CD8-positive, alpha-beta T cell (primary cell): ENCODE measurements at regions of chr5 and their contacts with region 1.

Region 1: GRCh38 chr5:173293817-173294672 is 34.2 kb downstream of the STC2 start:
- DNase-seq: peak; percentile 33 to 78 (median 59)
- ATAC-seq: peak; percentile 69
- H3K4me3 ChIP-seq: peak overlapping the region; percentile 4 to 27
- H3K4me3 Mint-ChIP-seq: peak overlapping the region; percentile 30
- H3K27ac ChIP-seq: no peak overlapping the region
- H3K27ac Mint-ChIP-seq: no peak overlapping the region
- H3K4me1 ChIP-seq: peaks cover 12% of the 10 kb centered on the region
- H3K4me1 Mint-ChIP-seq: peaks cover 13% of the 10 kb centered on the region
- H3K27me3 ChIP-seq: peaks cover 0 to 5% of the 10 kb centered on the region in 2 experiments
- H3K27me3 Mint-ChIP-seq: peaks cover 30% of the 10 kb centered on the region
- CTCF ChIP-seq: peak; percentile 64

Region 2: GRCh38 chr5:173178369-173178910 is 115.6 kb before region 1 on chr5:
- CTCF ChIA-PET with region 1: no interaction called
- POLR2A ChIA-PET with region 1: no interaction called
- intact Hi-C with region 1: no loop called
- DNase-seq: no peak
- ATAC-seq: no peak
- H3K4me3 ChIP-seq: no peak overlapping the region
- H3K4me3 Mint-ChIP-seq: no peak overlapping the region
- H3K27ac ChIP-seq: no peak overlapping the region
- H3K27ac Mint-ChIP-seq: no peak overlapping the region
- H3K4me1 ChIP-seq: no peaks in the 10 kb centered on the region
- H3K4me1 Mint-ChIP-seq: no peaks in the 10 kb centered on the region
- H3K27me3 ChIP-seq: no peaks in the 10 kb centered on the region
- H3K27me3 Mint-ChIP-seq: peaks cover 8% of the 10 kb centered on the region
- CTCF ChIP-seq: no peak

Region 3: GRCh38 chr5:173304591-173304988 is 10.5 kb after region 1 on chr5:
- CTCF ChIA-PET with region 1: interaction called, 14 read pairs
- POLR2A ChIA-PET with region 1: no interaction called
- intact Hi-C with region 1: no loop called
- DNase-seq: no peak
- ATAC-seq: no peak
- H3K4me3 ChIP-seq: no peak overlapping the region
- H3K4me3 Mint-ChIP-seq: no peak overlapping the region
- H3K27ac ChIP-seq: no peak overlapping the region
- H3K27ac Mint-ChIP-seq: no peak overlapping the region
- H3K4me1 ChIP-seq: no peaks in the 10 kb centered on the region
- H3K4me1 Mint-ChIP-seq: no peaks in the 10 kb centered on the region
- H3K27me3 ChIP-seq: peaks cover 0 to 2% of the 10 kb centered on the region in 2 experiments
- H3K27me3 Mint-ChIP-seq: peaks cover 39% of the 10 kb centered on the region
- CTCF ChIP-seq: no peak

Region 4: DNA sequence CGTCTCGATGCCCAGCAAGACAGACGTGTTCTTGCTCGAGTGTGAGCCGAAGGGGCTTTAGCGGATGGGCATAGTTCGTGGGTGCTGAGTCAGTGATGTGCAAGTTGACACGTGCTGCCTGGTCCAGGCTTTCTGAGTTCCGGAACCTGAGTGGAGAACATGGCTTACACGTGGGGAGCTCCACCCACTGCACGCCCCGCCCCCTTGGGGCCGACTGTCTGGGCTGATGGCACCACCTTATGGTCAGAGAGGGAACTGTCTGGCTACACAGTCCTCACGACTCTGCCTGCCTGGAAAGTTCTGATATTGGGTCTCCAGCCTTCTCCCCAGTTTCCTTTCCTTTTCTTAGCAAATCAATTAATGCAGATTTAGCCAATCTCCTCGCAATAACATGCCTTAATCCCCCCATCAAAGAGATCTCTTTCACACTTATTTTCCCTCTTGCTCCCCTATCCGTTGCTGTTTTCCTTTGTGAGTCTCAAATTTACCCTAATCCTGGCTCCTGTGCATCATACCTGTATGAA is 38.0 kb after region 1 on chr5:
- CTCF ChIA-PET with region 1: interaction called, 7 read pairs
- POLR2A ChIA-PET with region 1: no interaction called
- intact Hi-C with region 1: loop called in 1 of 2 experiments (anchors 1 kb)
- DNase-seq: peak; percentile 24 to 69 (median 61)
- ATAC-seq: peak; percentile 96
- H3K4me3 ChIP-seq: no peak overlapping the region
- H3K4me3 Mint-ChIP-seq: no peak overlapping the region
- H3K27ac ChIP-seq: no peak overlapping the region
- H3K27ac Mint-ChIP-seq: no peak overlapping the region
- H3K4me1 ChIP-seq: no peaks in the 10 kb centered on the region
- H3K4me1 Mint-ChIP-seq: peaks cover 14% of the 10 kb centered on the region
- H3K27me3 ChIP-seq: peaks cover 0 to 8% of the 10 kb centered on the region in 2 experiments
- H3K27me3 Mint-ChIP-seq: peaks cover 54% of the 10 kb centered on the region
- CTCF ChIP-seq: peak; percentile 45

Region 5: GRCh38 chr5:173573126-173573960 is 279.3 kb after region 1 on chr5:
- CTCF ChIA-PET with region 1: interaction called, 5 read pairs
- POLR2A ChIA-PET with region 1: no interaction called
- intact Hi-C with region 1: loop called in 1 of 2 experiments (anchors 2 kb)
- DNase-seq: peak; percentile 39 to 78 (median 64)
- ATAC-seq: peak; percentile 48
- H3K4me3 ChIP-seq: no peak overlapping the region
- H3K4me3 Mint-ChIP-seq: no peak overlapping the region
- H3K27ac ChIP-seq: no peak overlapping the region
- H3K27ac Mint-ChIP-seq: no peak overlapping the region
- H3K4me1 ChIP-seq: peaks cover 4% of the 10 kb centered on the region
- H3K4me1 Mint-ChIP-seq: peaks cover 7% of the 10 kb centered on the region
- H3K27me3 ChIP-seq: peaks cover 5 to 6% of the 10 kb centered on the region in 2 experiments
- H3K27me3 Mint-ChIP-seq: peaks cover 26% of the 10 kb centered on the region
- CTCF ChIP-seq: peak; percentile 94

Region 6: GRCh38 chr5:174311531-174312269 is 1017.7 kb after region 1 on chr5:
- CTCF ChIA-PET with region 1: interaction called, 4 read pairs
- POLR2A ChIA-PET with region 1: no interaction called
- intact Hi-C with region 1: loop called in 1 of 2 experiments (anchors 5 kb)
- DNase-seq: peak; percentile 13 to 61 (median 44)
- ATAC-seq: peak; percentile 56
- H3K4me3 ChIP-seq: no peak overlapping the region
- H3K4me3 Mint-ChIP-seq: no peak overlapping the region
- H3K27ac ChIP-seq: no peak overlapping the region
- H3K27ac Mint-ChIP-seq: no peak overlapping the region
- H3K4me1 ChIP-seq: no peaks in the 10 kb centered on the region
- H3K4me1 Mint-ChIP-seq: peaks cover 5% of the 10 kb centered on the region
- H3K27me3 ChIP-seq: peaks cover 0 to 4% of the 10 kb centered on the region in 2 experiments
- H3K27me3 Mint-ChIP-seq: peaks cover 42% of the 10 kb centered on the region
- CTCF ChIP-seq: peak; percentile 54

Region 7: DNA sequence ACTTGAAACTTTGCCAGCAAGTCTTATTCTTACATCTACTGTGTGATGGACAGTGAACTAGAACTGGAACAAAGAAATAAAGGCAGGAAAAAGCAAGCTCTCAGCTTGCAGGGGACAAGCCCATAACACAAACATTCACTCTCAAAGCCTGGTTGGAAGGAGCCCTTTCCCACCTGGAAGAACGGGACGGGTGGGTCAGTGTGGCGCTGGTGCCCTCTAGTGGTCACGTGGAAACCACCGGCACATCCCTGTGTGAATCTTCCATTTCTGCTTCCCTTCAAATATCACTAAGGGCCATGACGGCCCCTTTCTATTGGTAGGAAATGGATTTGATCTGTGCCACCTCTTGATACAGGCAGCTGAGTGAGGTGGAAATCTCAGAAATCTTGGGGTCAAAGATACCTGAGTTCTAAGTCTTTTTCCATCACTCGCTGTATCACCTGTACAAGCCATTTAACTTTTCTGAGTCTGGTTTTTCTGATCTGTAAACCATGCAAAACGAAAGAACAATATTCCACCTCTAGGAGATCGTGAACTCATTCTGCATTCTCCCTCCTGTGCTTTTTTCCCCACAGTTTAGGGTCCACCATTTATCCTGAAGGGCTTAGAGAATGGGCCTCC is 1641.9 kb after region 1 on chr5:
- CTCF ChIA-PET with region 1: no interaction called
- POLR2A ChIA-PET with region 1: no interaction called
- intact Hi-C with region 1: loop called in 1 of 2 experiments (anchors 5 kb)
- DNase-seq: peak in 6 of 9 experiments; percentile 11 to 56 (median 34)
- ATAC-seq: no peak
- H3K4me3 ChIP-seq: no peak overlapping the region
- H3K4me3 Mint-ChIP-seq: no peak overlapping the region
- H3K27ac ChIP-seq: no peak overlapping the region
- H3K27ac Mint-ChIP-seq: no peak overlapping the region
- H3K4me1 ChIP-seq: no peaks in the 10 kb centered on the region
- H3K4me1 Mint-ChIP-seq: no peaks in the 10 kb centered on the region
- H3K27me3 ChIP-seq: no peaks in the 10 kb centered on the region
- H3K27me3 Mint-ChIP-seq: peaks cover 18% of the 10 kb centered on the region
- CTCF ChIP-seq: peak; percentile 83